Activated CD4-positive, alpha-beta T cell treated with anti-CD3 and anti-CD28 coated beads, Interleukin-2, amount 10 ng/mL, durations not matched to agents 24 days and 14 days (primary cell): ENCODE measurements at regions of chr3 and their contacts with region 1.

Region 1: DNA sequence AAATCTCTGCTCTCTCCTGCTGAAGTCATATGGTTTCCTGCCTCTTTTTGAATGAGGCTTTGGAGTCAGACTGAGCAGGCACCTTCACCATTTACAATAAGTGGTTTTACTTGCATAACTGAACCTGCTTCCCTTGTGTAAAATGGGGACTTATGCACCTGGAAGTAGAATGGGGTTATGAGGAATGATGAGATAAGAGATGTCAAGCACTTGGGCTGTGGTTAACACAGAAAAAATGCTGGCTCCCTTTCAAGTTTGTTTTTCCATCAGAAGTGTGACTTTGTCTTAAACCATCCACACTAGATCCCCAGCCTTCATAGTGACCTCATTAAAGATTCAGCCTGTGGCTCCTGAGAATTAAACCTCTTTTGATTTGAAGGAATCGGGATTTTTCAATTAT is 5.2 kb downstream of the EXOSC7 start:
- DNase-seq: peak; percentile 61
- H3K4me3 Mint-ChIP-seq: peak overlapping the region; percentile 47
- H3K27ac Mint-ChIP-seq: peak overlapping the region; percentile 70
- H3K4me1 Mint-ChIP-seq: peaks cover 76% of the 10 kb centered on the region
- H3K27me3 Mint-ChIP-seq: no peaks in the 10 kb centered on the region

Region 2: DNA sequence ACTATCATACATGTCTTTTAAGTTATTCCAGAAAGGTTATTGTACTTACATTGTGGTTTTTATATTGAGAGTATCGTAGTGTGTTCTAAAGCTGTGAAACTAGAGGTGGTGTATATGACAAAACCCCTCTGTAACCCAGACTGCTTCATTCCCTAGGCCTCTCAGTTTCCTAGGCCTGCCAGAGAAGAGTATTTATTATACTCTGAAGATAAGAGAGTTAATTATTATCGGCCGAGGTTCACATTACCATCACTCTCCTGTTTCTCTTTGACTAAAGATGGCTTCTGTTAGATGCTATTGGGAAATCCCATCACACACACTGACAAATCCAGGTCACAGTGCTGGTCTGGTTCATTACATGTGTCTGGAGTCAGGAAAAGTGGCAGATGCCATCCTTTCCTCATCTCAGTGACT is 15.3 kb after region 1 on chr3:
- intact Hi-C with region 1: loop called (anchors 2 kb)
- DNase-seq: no peak
- H3K4me3 Mint-ChIP-seq: no peak overlapping the region
- H3K27ac Mint-ChIP-seq: peak overlapping the region; percentile 52
- H3K4me1 Mint-ChIP-seq: peaks cover 31% of the 10 kb centered on the region
- H3K27me3 Mint-ChIP-seq: no peaks in the 10 kb centered on the region

Region 3: GRCh38 chr3:45092132-45093031 is 111.2 kb after region 1 on chr3:
- intact Hi-C with region 1: no loop called
- DNase-seq: no peak
- H3K4me3 Mint-ChIP-seq: no peak overlapping the region
- H3K27ac Mint-ChIP-seq: no peak overlapping the region
- H3K4me1 Mint-ChIP-seq: peaks cover 14% of the 10 kb centered on the region
- H3K27me3 Mint-ChIP-seq: peaks cover 34% of the 10 kb centered on the region